IMR-90 (cell line): ENCODE measurements at regions of chr19 and their contacts with region 1.

Region 1: GRCh38 chr19:3163230-3163886 is 15.2 kb upstream of the S1PR4 start:
- DNase-seq: peak; percentile 43
- ATAC-seq: peak; percentile 95
- H3K4me3 ChIP-seq: no peak overlapping the region
- H3K27ac ChIP-seq: no peak overlapping the region
- H3K4me1 ChIP-seq: no peaks in the 10 kb centered on the region; the same call in 1 of the 2 replicates
- H3K27me3 ChIP-seq: no peaks in the 10 kb centered on the region
- CTCF ChIP-seq: peak; percentile 94
- POLR2A ChIP-seq: no peak
- RAD21 ChIP-seq: peak; percentile 96

Region 2: DNA sequence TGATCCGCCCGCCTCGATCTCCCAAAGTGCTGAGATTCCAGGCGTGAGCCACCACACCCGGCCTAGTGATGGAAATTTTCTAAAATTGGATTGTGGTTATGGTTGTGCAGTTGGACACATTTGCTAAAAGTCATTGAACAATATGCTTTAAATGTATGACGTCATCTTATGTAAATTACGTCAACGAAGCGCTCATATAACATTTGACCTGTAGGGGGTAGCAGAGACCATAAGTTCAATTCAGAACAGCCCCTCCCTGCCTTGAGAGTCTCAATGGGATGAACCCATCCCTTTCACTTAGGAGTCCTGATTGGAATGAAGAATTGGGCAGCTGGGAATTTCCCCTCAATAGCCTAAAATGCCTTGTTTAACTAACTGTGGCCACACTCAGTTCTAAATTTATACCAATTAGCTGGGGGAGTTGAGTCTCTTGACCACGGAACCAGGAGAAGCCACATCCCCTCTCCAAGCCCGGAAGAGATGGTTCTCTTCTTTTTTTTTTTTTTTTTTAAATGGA is 201.3 kb before region 1 on chr19:
- CTCF ChIA-PET with region 1: interaction called, 3 read pairs
- POLR2A ChIA-PET with region 1: no interaction called
- dilution Hi-C with region 1: no loop called
- in situ Hi-C with region 1: loop called (anchors 5 kb)
- intact Hi-C with region 1: loop called (anchors 1 kb)
- DNase-seq: peak; percentile 89
- ATAC-seq: peak; percentile 99
- H3K4me3 ChIP-seq: peak overlapping the region; percentile 14; the same call in 1 of the 2 replicates
- H3K27ac ChIP-seq: no peak overlapping the region
- H3K4me1 ChIP-seq: no peaks in the 10 kb centered on the region
- H3K27me3 ChIP-seq: peaks cover 3% of the 10 kb centered on the region
- CTCF ChIP-seq: peak; percentile 95
- POLR2A ChIP-seq: no peak
- RAD21 ChIP-seq: peak; percentile 85

Region 3: DNA sequence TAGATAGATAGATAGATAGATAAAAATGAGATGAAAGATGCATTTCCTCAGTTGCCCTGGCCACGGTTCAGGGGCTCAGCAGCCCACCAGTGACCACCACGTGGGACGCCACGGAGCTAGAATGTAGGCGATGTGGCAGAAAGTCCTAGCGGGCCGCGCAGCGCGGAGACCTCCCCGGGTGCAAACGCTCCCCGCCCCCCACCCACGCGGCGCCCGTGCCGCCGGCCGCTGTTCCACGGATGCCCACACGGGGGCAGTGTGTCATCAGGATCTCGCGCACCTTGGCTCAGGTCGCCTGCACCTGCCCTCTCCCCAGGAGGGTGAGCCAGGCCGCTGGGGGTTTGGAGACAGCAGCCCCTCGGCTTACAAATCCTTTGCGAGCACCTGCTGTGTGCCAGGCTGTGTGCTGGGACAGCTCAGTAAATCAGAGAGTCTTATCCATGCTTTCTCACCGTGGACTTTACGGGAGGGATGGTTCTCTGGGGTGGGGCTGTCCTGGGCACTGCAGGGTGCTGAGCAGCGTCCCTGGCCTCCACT is 87.4 kb before region 1 on chr19:
- CTCF ChIA-PET with region 1: interaction called, 4 read pairs
- POLR2A ChIA-PET with region 1: no interaction called
- dilution Hi-C with region 1: no loop called
- in situ Hi-C with region 1: no loop called
- intact Hi-C with region 1: loop called (anchors 1 kb)
- DNase-seq: no peak
- ATAC-seq: peak; percentile 75
- H3K4me3 ChIP-seq: peak overlapping the region; percentile 20; the same call in 1 of the 2 replicates
- H3K27ac ChIP-seq: no peak overlapping the region
- H3K4me1 ChIP-seq: peaks cover 3% of the 10 kb centered on the region; the same call in 1 of the 2 replicates
- H3K27me3 ChIP-seq: no peaks in the 10 kb centered on the region
- CTCF ChIP-seq: peak; percentile 84
- POLR2A ChIP-seq: no peak
- RAD21 ChIP-seq: peak; percentile 77

Region 4: DNA sequence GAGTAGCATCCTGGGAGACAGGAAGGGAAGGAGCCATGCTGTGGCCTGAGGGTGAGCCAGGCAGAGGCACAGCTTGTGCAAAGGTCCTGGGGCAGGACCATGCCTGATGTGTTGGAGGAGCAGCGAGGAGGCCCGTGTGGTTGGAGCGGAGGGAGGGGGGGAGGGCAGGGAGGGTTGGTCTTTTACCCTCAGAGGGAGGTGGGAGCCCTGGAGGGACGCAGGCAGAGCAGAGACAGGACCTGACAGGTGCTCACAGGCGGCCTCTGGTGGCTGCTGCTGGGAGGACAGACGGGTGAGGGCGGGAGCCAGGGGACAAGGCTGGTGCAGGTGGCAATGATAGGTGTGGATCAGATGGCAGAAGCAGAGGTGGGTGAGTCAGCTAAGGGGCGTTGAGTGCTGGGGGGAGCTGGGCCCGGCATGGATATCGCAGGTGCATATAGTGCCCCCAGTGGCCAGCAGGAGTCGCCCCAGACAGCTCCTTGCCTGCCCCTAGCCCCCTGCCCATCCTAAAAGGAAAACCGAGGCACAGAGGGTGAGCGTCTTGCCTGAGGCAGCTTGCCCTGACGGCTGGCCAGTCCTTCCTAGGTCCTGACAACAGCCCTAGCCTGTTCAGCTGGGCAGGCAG is 37.3 kb before region 1 on chr19:
- CTCF ChIA-PET with region 1: interaction called, 8 read pairs
- POLR2A ChIA-PET with region 1: no interaction called
- dilution Hi-C with region 1: no loop called
- in situ Hi-C with region 1: no loop called
- intact Hi-C with region 1: loop called (anchors 1 kb)
- DNase-seq: no peak
- ATAC-seq: peak; percentile 88
- H3K4me3 ChIP-seq: no peak overlapping the region
- H3K27ac ChIP-seq: no peak overlapping the region
- H3K4me1 ChIP-seq: no peaks in the 10 kb centered on the region
- H3K27me3 ChIP-seq: no peaks in the 10 kb centered on the region
- CTCF ChIP-seq: peak; percentile 53
- POLR2A ChIP-seq: no peak
- RAD21 ChIP-seq: peak; percentile 38; the same call in 1 of the 2 replicates

Region 5: GRCh38 chr19:3146677-3147100 is 16.7 kb before region 1 on chr19:
- CTCF ChIA-PET with region 1: no interaction called
- POLR2A ChIA-PET with region 1: no interaction called
- dilution Hi-C with region 1: no loop called
- in situ Hi-C with region 1: no loop called
- intact Hi-C with region 1: no loop called
- DNase-seq: no peak
- ATAC-seq: no peak
- H3K4me3 ChIP-seq: no peak overlapping the region
- H3K27ac ChIP-seq: no peak overlapping the region
- H3K4me1 ChIP-seq: peaks cover 6% of the 10 kb centered on the region
- H3K27me3 ChIP-seq: no peaks in the 10 kb centered on the region
- CTCF ChIP-seq: peak; percentile 52
- POLR2A ChIP-seq: no peak
- RAD21 ChIP-seq: peak; percentile 40

Region 6: DNA sequence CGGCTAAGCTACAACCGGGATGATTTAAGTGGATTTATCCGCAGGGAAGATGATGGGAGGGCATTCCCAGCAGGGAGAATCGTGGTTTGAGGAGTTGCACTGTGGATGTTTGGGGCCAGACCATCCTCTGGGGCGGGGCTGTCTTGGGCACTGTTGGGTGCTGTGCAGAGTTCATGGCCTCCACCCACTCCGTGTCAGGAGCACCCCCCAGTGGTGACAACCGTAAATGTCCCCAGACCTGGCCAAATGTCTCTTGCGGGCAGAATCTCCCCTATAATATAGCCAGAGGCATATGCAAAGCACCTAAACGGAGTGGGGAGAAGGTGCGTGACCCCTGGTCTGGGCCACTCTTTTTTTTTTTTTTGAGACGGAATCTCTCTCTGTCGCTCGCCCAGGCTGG is 276.7 kb after region 1 on chr19:
- CTCF ChIA-PET with region 1: no interaction called
- POLR2A ChIA-PET with region 1: no interaction called
- dilution Hi-C with region 1: no loop called
- in situ Hi-C with region 1: no loop called
- intact Hi-C with region 1: no loop called
- DNase-seq: no peak
- ATAC-seq: no peak
- H3K4me3 ChIP-seq: no peak overlapping the region
- H3K27ac ChIP-seq: no peak overlapping the region
- H3K4me1 ChIP-seq: peaks cover 3% of the 10 kb centered on the region
- H3K27me3 ChIP-seq: no peaks in the 10 kb centered on the region
- CTCF ChIP-seq: peak; percentile 32; the same call in 1 of the 2 replicates
- POLR2A ChIP-seq: no peak
- RAD21 ChIP-seq: peak; percentile 40

Region 7: DNA sequence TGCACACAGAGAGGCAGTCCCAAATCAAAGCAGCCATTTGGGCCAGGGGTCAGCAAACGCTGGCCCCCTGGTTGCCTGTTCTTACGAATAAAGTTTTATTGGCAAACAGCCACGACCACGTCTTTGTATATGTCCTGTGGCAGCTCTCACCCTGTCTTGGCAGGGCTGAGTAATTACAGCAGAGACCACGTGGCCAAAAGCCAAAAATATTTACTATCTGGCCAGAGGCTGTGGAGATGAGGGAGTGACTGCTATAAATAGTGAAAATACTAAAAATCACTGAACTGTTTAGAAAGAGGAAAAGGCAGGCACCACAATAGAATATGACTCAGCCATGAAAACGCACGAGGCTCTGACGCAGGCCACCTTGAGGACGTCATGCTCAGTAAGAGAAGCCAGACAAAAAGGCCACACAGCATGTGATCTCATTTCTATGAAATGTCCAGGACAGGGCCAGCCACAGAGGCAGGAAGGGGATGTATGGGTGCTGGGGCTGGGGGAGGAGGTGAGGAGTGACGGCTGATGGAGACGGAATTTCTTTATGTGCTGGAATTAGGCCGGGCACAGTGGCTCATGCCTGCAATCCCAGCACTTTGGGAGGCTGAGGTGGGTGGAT is 287.5 kb after region 1 on chr19:
- CTCF ChIA-PET with region 1: no interaction called
- POLR2A ChIA-PET with region 1: no interaction called
- dilution Hi-C with region 1: no loop called
- in situ Hi-C with region 1: no loop called
- intact Hi-C with region 1: no loop called
- DNase-seq: peak; percentile 100
- ATAC-seq: peak; percentile 96
- H3K4me3 ChIP-seq: no peak overlapping the region
- H3K27ac ChIP-seq: peak overlapping the region; percentile 67
- H3K4me1 ChIP-seq: peaks cover 2% of the 10 kb centered on the region
- H3K27me3 ChIP-seq: no peaks in the 10 kb centered on the region
- CTCF ChIP-seq: no peak
- POLR2A ChIP-seq: no peak
- RAD21 ChIP-seq: no peak